MCF 10A (cell line): ENCODE measurements at regions of chr19 and their contacts with region 1.

Region 1: GRCh38 chr19:35352448-35353304 is 5.0 kb downstream of the FFAR1 start:
- DNase-seq: peak; percentile 79
- H3K4me3 Mint-ChIP-seq: no peak overlapping the region
- H3K27ac Mint-ChIP-seq: no peak overlapping the region
- H3K4me1 Mint-ChIP-seq: peaks cover 4% of the 10 kb centered on the region
- H3K27me3 Mint-ChIP-seq: peaks cover 33% of the 10 kb centered on the region
- CTCF ChIP-seq: peak; percentile 79

Region 2: DNA sequence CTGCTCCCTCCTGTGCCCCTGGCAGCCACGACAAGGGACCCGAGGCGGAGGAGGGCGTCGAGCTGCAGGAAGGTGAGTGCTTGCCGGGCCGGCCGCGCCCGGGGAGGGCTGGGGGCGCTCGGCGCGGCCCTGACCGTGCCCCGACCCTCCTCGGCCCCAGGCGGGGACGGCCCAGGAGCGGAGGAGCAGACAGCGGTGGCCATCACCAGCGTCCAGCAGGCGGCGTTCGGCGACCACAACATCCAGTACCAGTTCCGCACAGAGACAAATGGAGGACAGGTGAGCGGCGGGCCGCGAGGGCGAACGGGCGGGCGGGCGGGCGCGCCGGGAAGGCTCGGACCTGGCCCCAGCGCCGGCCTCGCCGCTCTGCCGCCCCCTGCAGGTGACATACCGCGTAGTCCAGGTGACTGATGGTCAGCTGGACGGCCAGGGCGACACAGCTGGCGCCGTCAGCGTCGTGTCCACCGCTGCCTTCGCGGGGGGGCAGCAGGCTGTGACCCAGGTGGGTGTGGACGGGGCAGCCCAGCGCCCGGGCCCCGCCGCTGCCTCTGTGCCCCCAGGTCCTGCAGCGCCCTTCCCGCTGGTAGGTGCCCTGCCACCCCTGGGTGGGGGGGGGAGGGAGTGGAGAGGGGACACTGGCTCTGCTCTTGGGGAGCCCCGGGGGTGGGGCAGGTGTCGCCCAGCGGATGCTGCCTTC is 83.1 kb before region 1 on chr19:
- CTCF ChIA-PET with region 1: interaction called, 4 read pairs
- POLR2A ChIA-PET with region 1: no interaction called
- intact Hi-C with region 1: loop called (anchors 10 kb)
- DNase-seq: peak; percentile 86
- H3K4me3 Mint-ChIP-seq: peak overlapping the region; percentile 83
- H3K27ac Mint-ChIP-seq: no peak overlapping the region
- H3K4me1 Mint-ChIP-seq: peaks cover 15% of the 10 kb centered on the region
- H3K27me3 Mint-ChIP-seq: no peaks in the 10 kb centered on the region
- CTCF ChIP-seq: peak; percentile 94

Region 3: DNA sequence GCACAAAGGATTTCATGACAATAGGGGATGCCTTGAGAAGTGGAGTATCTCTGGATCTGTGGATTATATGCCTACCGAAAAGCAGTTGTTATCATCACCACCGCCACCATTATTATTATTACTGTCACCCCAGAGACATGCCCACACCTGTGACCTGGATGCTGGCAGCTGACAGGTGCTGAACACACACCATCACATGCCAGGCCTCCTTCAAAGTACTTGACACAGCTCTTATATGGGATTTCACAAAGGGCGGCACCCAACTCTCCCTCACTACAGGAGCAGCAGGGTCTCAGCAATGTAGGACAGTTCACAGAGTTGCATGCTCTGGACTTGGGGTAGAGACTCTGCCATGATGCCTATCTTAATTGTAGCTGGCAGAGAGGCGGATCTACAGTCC is 12.6 kb after region 1 on chr19:
- CTCF ChIA-PET with region 1: interaction called, 12 read pairs
- POLR2A ChIA-PET with region 1: no interaction called
- intact Hi-C with region 1: no loop called
- DNase-seq: no peak
- H3K4me3 Mint-ChIP-seq: no peak overlapping the region
- H3K27ac Mint-ChIP-seq: no peak overlapping the region
- H3K4me1 Mint-ChIP-seq: no peaks in the 10 kb centered on the region
- H3K27me3 Mint-ChIP-seq: peaks cover 96% of the 10 kb centered on the region
- CTCF ChIP-seq: no peak

Region 4: GRCh38 chr19:35417713-35418534 is 65.2 kb after region 1 on chr19:
- CTCF ChIA-PET with region 1: interaction called, 11 read pairs
- POLR2A ChIA-PET with region 1: no interaction called
- intact Hi-C with region 1: no loop called
- DNase-seq: no peak
- H3K4me3 Mint-ChIP-seq: no peak overlapping the region
- H3K27ac Mint-ChIP-seq: no peak overlapping the region
- H3K4me1 Mint-ChIP-seq: no peaks in the 10 kb centered on the region
- H3K27me3 Mint-ChIP-seq: peaks cover 70% of the 10 kb centered on the region
- CTCF ChIP-seq: no peak

Region 5: GRCh38 chr19:35462476-35462953 is 109.8 kb after region 1 on chr19:
- CTCF ChIA-PET with region 1: interaction called, 143 read pairs
- POLR2A ChIA-PET with region 1: no interaction called
- intact Hi-C with region 1: no loop called
- DNase-seq: no peak
- H3K4me3 Mint-ChIP-seq: no peak overlapping the region
- H3K27ac Mint-ChIP-seq: no peak overlapping the region
- H3K4me1 Mint-ChIP-seq: no peaks in the 10 kb centered on the region
- H3K27me3 Mint-ChIP-seq: peaks cover 53% of the 10 kb centered on the region
- CTCF ChIP-seq: no peak

Region 6: GRCh38 chr19:36169084-36169760 is 816.5 kb after region 1 on chr19:
- CTCF ChIA-PET with region 1: no interaction called
- POLR2A ChIA-PET with region 1: no interaction called
- intact Hi-C with region 1: no loop called
- DNase-seq: no peak
- H3K4me3 Mint-ChIP-seq: no peak overlapping the region
- H3K27ac Mint-ChIP-seq: peak overlapping the region; percentile 3
- H3K4me1 Mint-ChIP-seq: no peaks in the 10 kb centered on the region
- H3K27me3 Mint-ChIP-seq: no peaks in the 10 kb centered on the region
- CTCF ChIP-seq: no peak